ENCODE measurements at regions of chr14 and their contacts with region 1.

Region 1: DNA sequence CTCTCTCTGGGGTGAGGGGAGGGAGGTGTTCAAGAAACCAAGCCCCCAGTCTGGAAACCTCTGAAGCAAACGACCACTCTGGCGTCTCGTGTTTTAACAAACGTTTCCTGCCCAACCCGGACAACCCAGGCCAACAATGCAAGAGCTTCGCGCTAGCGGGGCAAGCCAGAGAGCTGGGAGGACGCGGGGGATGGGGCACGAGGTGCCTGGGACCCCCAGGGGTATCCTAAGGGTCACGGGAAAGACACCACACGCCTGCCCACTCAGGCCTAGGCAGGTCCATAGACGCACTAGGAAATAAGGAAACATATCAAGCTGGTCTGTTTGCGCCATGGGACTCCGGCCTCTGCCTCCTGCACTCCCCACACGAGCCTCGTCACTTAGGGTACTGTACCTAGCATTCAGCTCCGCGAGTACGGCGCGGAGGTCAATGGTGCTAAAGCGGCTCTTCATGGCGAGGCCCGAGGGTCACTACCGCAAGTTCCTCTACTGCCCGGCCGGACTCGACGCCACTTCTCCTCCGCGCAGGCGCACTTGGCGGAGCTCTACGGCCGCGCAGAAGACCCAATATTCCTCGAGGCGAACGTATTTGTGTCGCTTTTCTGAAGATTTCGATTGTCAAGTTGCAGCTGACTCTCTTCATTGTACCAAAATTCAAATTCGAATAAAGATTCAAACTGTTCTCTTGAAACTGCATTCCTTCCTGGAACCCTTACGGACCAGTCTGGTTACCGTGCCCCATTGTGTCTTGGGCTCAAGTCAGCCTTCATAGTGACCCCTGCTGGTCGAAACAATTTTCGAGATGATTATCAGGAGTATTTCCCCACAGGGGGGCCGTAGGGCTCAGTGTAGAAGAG is at the start of gene NEMF:
- DNase-seq: peak; percentile 88
- H3K4me3 Mint-ChIP-seq: peak within 1 kb of the TSS; percentile 98
- H3K27ac Mint-ChIP-seq: peak within 1 kb of the TSS; percentile 95
- H3K4me1 Mint-ChIP-seq: peaks cover 39% of the 10 kb centered on the region
- H3K27me3 Mint-ChIP-seq: no peaks in the 10 kb centered on the region
- total RNA-seq, gene NEMF: 63.6 to 71.0 TPM

Region 2: GRCh38 chr14:49294621-49295148 is 557.8 kb before region 1 on chr14:
- CTCF ChIA-PET with region 1: no interaction called
- POLR2A ChIA-PET with region 1: no interaction called
- intact Hi-C with region 1: no loop called
- DNase-seq: no peak
- H3K4me3 Mint-ChIP-seq: no peak overlapping the region
- H3K27ac Mint-ChIP-seq: no peak overlapping the region
- H3K4me1 Mint-ChIP-seq: no peaks in the 10 kb centered on the region
- H3K27me3 Mint-ChIP-seq: peaks cover 4% of the 10 kb centered on the region

Region 3: GRCh38 chr14:49692811-49693734 is 159.5 kb before region 1 on chr14 and contains the start of gene KLHDC1:
- CTCF ChIA-PET with region 1: interaction called, 4 read pairs
- POLR2A ChIA-PET with region 1: interaction called, 4 read pairs
- intact Hi-C with region 1: loop called (anchors 5 kb)
- DNase-seq: peak; percentile 86
- H3K4me3 Mint-ChIP-seq: peak within 1 kb of the TSS; percentile 77
- H3K27ac Mint-ChIP-seq: peak within 1 kb of the TSS; percentile 40
- H3K4me1 Mint-ChIP-seq: peaks cover 27% of the 10 kb centered on the region
- H3K27me3 Mint-ChIP-seq: no peaks in the 10 kb centered on the region
- total RNA-seq, gene KLHDC1: 1.4 to 1.9 TPM

Region 4: DNA sequence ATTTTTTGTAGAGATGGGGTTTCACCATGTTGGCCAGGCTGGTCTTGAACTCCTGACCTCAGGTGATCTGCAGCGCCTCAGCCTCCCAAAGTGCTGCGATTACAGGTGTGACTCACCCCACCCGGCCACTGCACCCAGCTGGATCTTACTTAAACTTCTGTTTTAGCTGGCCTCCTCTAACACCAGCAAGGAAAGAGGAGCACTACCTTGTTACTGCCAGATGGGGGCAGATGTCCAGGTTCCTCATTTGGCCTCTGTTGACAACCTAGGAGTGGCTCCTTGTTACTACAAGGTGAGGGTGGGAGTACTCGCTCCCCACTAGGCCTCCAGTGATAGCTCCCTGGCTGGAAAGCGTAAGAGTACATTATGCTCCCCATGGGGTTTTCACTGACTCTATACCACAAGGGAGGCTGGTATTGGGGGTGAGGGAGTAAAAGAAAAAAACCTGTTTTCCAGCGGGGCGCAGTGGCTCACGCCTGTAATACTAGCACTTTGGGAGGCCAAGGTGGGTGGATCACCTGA is 27.2 kb after region 1 on chr14:
- CTCF ChIA-PET with region 1: interaction called, 13 read pairs
- POLR2A ChIA-PET with region 1: no interaction called
- intact Hi-C with region 1: no loop called
- DNase-seq: peak; percentile 87
- H3K4me3 Mint-ChIP-seq: peak overlapping the region; percentile 12
- H3K27ac Mint-ChIP-seq: peak overlapping the region; percentile 62
- H3K4me1 Mint-ChIP-seq: peaks cover 35% of the 10 kb centered on the region
- H3K27me3 Mint-ChIP-seq: no peaks in the 10 kb centered on the region

Region 5: GRCh38 chr14:50116181-50116956 is 263.8 kb after region 1 on chr14 and contains the start of gene VCPKMT:
- CTCF ChIA-PET with region 1: interaction called, 23 read pairs
- POLR2A ChIA-PET with region 1: interaction called, 7 read pairs
- intact Hi-C with region 1: no loop called
- DNase-seq: peak; percentile 96
- H3K4me3 Mint-ChIP-seq: peak within 1 kb of the TSS; percentile 98
- H3K27ac Mint-ChIP-seq: peak within 1 kb of the TSS; percentile 95
- H3K4me1 Mint-ChIP-seq: peaks cover 37% of the 10 kb centered on the region
- H3K27me3 Mint-ChIP-seq: no peaks in the 10 kb centered on the region
- total RNA-seq, gene VCPKMT: 7.7 to 10.1 TPM

Region 6: GRCh38 chr14:50156111-50156510 is 303.6 kb after region 1 on chr14:
- CTCF ChIA-PET with region 1: no interaction called
- POLR2A ChIA-PET with region 1: no interaction called
- intact Hi-C with region 1: no loop called
- DNase-seq: no peak
- H3K4me3 Mint-ChIP-seq: no peak overlapping the region
- H3K27ac Mint-ChIP-seq: no peak overlapping the region
- H3K4me1 Mint-ChIP-seq: no peaks in the 10 kb centered on the region
- H3K27me3 Mint-ChIP-seq: no peaks in the 10 kb centered on the region